PC-3 (cell line): ENCODE measurements at regions of chr10 and their contacts with region 1.

Region 1: GRCh38 chr10:54133203-54133602 is 667.8 kb downstream of the PCDH15 start:
- DNase-seq: peak; percentile 54
- ATAC-seq: peak; percentile 63
- H3K4me3 ChIP-seq: no peak overlapping the region
- H3K27ac ChIP-seq: no peak overlapping the region
- H3K4me1 ChIP-seq: no peaks in the 10 kb centered on the region
- H3K27me3 ChIP-seq: no peaks in the 10 kb centered on the region
- CTCF ChIP-seq: peak; percentile 91

Region 2: GRCh38 chr10:53839440-53840039 is 293.7 kb before region 1 on chr10:
- CTCF ChIA-PET with region 1: no interaction called
- POLR2A ChIA-PET with region 1: no interaction called
- intact Hi-C with region 1: loop called (anchors 5 kb)
- DNase-seq: peak; percentile 78
- ATAC-seq: no peak
- H3K4me3 ChIP-seq: no peak overlapping the region
- H3K27ac ChIP-seq: no peak overlapping the region
- H3K4me1 ChIP-seq: peaks cover 9% of the 10 kb centered on the region; the same call in 1 of the 2 replicates
- H3K27me3 ChIP-seq: no peaks in the 10 kb centered on the region
- CTCF ChIP-seq: peak; percentile 71

Region 3: GRCh38 chr10:54284526-54285193 is 151.5 kb after region 1 on chr10:
- CTCF ChIA-PET with region 1: no interaction called
- POLR2A ChIA-PET with region 1: no interaction called
- intact Hi-C with region 1: loop called (anchors 5 kb)
- DNase-seq: peak; percentile 72
- ATAC-seq: peak; percentile 87
- H3K4me3 ChIP-seq: no peak overlapping the region
- H3K27ac ChIP-seq: no peak overlapping the region
- H3K4me1 ChIP-seq: no peaks in the 10 kb centered on the region
- H3K27me3 ChIP-seq: no peaks in the 10 kb centered on the region
- CTCF ChIP-seq: no peak

Region 4: DNA sequence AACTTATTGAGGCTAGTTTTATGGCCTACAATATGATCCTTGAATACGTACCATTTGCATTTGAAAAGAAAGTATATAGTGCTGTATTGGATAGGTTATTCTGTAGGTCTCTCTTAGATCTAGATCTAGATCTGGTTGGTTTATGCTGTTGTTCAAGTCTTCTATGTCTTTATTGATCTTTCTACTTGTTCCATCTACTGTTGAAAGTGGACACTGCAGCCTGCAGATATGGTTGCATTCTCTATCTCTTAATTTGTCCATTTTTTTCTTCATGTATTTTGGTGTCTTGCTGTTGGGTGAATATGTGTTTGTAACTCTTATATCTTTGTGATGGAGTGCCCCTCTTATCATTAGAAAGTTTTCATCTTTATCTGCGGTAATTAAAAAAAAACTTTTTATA is 807.2 kb after region 1 on chr10:
- CTCF ChIA-PET with region 1: no interaction called
- POLR2A ChIA-PET with region 1: no interaction called
- intact Hi-C with region 1: loop called (anchors 10 kb)
- DNase-seq: peak; percentile 17
- ATAC-seq: peak; percentile 82
- H3K4me3 ChIP-seq: no peak overlapping the region
- H3K27ac ChIP-seq: no peak overlapping the region
- H3K4me1 ChIP-seq: no peaks in the 10 kb centered on the region
- H3K27me3 ChIP-seq: no peaks in the 10 kb centered on the region
- CTCF ChIP-seq: peak; percentile 54